Endothelial cell of umbilical vein (primary cell): ENCODE measurements at regions of chr2 and their contacts with region 1.

Region 1: DNA sequence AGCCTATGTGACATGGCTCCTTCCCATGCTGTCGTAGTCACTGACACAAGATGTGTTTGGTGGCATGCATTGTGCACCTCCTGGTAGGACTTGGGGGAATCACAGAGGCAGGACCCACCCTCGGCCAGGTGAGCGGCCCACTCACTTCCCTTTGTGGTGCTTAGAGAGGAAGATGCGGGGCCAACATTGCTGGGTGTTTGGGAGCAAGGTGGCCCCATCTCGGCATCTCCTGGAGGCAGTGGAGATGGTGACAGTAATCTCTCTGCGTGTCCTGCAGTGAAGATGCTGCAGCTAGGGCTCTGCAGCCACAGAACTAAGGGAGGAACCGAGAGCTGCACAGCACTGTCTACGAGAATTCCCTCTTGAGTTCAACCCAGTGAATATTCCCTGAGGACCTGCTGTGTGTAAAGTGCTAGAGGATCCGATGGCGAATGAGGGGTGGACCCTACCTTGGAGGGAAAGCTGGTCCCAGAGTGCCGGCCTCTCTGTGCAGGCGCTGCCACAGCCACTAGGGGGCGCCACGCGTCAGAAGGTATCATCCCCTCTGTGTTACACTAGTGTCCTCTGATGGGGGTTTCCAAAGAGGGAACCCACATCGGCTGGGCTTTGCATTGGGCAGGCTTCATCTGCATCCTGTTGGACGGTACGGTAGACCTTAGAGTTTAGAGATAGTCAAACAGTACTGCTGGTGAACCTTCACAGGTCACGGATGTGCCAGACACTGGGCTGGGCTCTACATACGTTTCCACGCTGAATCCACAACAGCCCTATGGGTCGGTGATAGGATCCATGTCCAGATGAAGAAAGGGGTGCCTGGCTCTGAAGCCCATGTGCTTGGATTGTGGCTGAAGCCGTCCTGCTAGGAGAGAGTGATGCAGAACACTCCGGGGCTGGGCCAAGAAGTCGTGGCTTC is 39.2 kb downstream of the COA5 start:
- DNase-seq: peak; percentile 30
- H3K4me3 ChIP-seq: no peak overlapping the region
- H3K27ac ChIP-seq: no peak overlapping the region
- H3K4me1 ChIP-seq: no peaks in the 10 kb centered on the region
- H3K27me3 ChIP-seq: no peaks in the 10 kb centered on the region
- CTCF ChIP-seq: peak; percentile 95
- POLR2A ChIP-seq: no peak

Region 2: GRCh38 chr2:97788986-97789644 is 780.0 kb before region 1 on chr2:
- CTCF ChIA-PET with region 1: no interaction called
- POLR2A ChIA-PET with region 1: no interaction called
- dilution Hi-C with region 1: no loop called
- intact Hi-C with region 1: no loop called
- DNase-seq: no peak
- H3K4me3 ChIP-seq: no peak overlapping the region
- H3K27ac ChIP-seq: no peak overlapping the region
- H3K4me1 ChIP-seq: no peaks in the 10 kb centered on the region
- H3K27me3 ChIP-seq: no peaks in the 10 kb centered on the region
- CTCF ChIP-seq: no peak
- POLR2A ChIP-seq: no peak

Region 3: GRCh38 chr2:98580656-98581284 is 11.6 kb after region 1 on chr2:
- CTCF ChIA-PET with region 1: interaction called, 14 read pairs
- POLR2A ChIA-PET with region 1: no interaction called
- dilution Hi-C with region 1: no loop called
- intact Hi-C with region 1: no loop called
- DNase-seq: no peak
- H3K4me3 ChIP-seq: no peak overlapping the region
- H3K27ac ChIP-seq: no peak overlapping the region
- H3K4me1 ChIP-seq: no peaks in the 10 kb centered on the region
- H3K27me3 ChIP-seq: no peaks in the 10 kb centered on the region
- CTCF ChIP-seq: no peak
- POLR2A ChIP-seq: no peak

Region 4: DNA sequence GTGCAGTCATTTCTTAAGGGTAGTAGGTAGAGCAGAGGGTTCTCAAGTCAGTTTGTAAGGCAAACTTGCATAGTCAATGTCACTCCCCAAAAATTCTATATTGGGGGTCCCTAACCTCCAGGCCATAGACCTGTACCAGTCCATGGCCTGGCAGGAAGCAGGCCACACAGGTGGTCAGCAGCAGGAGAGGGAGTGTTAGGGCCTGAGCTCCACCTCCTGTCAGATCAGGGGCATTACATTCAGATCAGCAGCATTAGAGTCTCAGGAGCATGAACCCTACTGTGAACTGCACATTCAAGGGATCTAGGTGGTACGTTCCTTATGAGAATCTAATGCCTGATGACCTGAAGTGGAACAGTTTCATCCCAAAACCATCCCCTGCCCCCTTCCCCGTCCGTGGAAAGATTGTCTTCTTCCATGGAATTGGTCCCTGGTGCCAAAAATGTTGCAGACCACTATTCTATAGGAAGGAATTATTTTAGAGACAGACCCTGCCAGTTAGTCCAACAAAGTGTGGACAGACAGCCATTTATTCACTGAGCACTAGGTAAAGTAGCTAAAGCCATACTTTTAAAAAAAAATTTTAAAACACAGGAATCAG is 32.5 kb after region 1 on chr2:
- CTCF ChIA-PET with region 1: interaction called, 24 read pairs
- POLR2A ChIA-PET with region 1: no interaction called
- dilution Hi-C with region 1: no loop called
- intact Hi-C with region 1: loop called (anchors 2 kb)
- DNase-seq: peak; percentile 48
- H3K4me3 ChIP-seq: no peak overlapping the region
- H3K27ac ChIP-seq: no peak overlapping the region
- H3K4me1 ChIP-seq: peaks cover 6% of the 10 kb centered on the region
- H3K27me3 ChIP-seq: no peaks in the 10 kb centered on the region
- CTCF ChIP-seq: peak; percentile 53 to 70
- POLR2A ChIP-seq: no peak

Region 5: GRCh38 chr2:98623657-98624056 is 54.5 kb after region 1 on chr2:
- CTCF ChIA-PET with region 1: no interaction called
- POLR2A ChIA-PET with region 1: no interaction called
- dilution Hi-C with region 1: no loop called
- intact Hi-C with region 1: no loop called
- DNase-seq: peak; percentile 74
- H3K4me3 ChIP-seq: no peak overlapping the region
- H3K27ac ChIP-seq: no peak overlapping the region
- H3K4me1 ChIP-seq: no peaks in the 10 kb centered on the region
- H3K27me3 ChIP-seq: no peaks in the 10 kb centered on the region
- CTCF ChIP-seq: no peak
- POLR2A ChIP-seq: no peak

Region 6: DNA sequence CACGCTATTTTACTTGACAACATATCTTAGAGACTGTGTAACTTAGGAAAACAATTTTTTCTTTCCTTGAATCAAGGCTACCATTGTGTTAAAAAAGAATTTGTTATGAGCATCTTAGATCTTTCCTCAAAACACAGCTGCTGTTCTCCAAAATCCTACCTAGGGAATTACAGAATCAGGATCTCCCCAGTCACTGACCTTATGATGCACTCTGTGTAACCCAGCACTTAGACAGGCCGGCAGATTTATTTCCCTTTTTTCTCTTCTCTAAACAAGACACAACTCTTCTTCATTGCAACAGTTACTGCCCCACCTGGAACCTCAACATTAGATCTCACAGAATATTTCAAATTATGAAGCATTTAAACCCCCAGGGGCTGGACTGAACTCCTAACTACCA is 558.8 kb after region 1 on chr2:
- CTCF ChIA-PET with region 1: no interaction called
- POLR2A ChIA-PET with region 1: no interaction called
- dilution Hi-C with region 1: no loop called
- intact Hi-C with region 1: no loop called
- DNase-seq: no peak
- H3K4me3 ChIP-seq: no peak overlapping the region
- H3K27ac ChIP-seq: no peak overlapping the region
- H3K4me1 ChIP-seq: no peaks in the 10 kb centered on the region
- H3K27me3 ChIP-seq: no peaks in the 10 kb centered on the region
- CTCF ChIP-seq: no peak
- POLR2A ChIP-seq: no peak